Uterus (tissue), 4 donors: ENCODE measurements at regions of chr20 and their contacts with region 1.

Region 1: GRCh38 chr20:31842471-31843157 is 2.8 kb downstream of the FOXS1 start:
- DNase-seq: peak; percentile 43 to 59
- H3K4me3 ChIP-seq: no peak overlapping the region
- H3K27ac ChIP-seq: peak overlapping the region; percentile 78 to 81
- H3K4me1 ChIP-seq: peaks cover 0 to 18% of the 10 kb centered on the region in 2 donors
- H3K27me3 ChIP-seq: no peaks in the 10 kb centered on the region
- CTCF ChIP-seq: no peak
- POLR2A ChIP-seq: no peak

Region 2: GRCh38 chr20:31951530-31952453 is 109.2 kb after region 1 on chr20 and contains the start of gene PDRG1:
- intact Hi-C with region 1: loop called (anchors 10 kb)
- DNase-seq: peak; percentile 94 to 95
- H3K4me3 ChIP-seq: peak within 1 kb of the TSS; percentile 62 to 83
- H3K27ac ChIP-seq: peak within 1 kb of the TSS; percentile 53 to 81
- H3K4me1 ChIP-seq: no peaks in the 10 kb centered on the region
- H3K27me3 ChIP-seq: no peaks in the 10 kb centered on the region
- CTCF ChIP-seq: peak; percentile 94 to 99 (median 98)
- POLR2A ChIP-seq: peak; percentile 67 to 68
- total RNA-seq, gene PDRG1: 1.2 to 109 (median 9.5) TPM